Activated CD8-positive, alpha-beta memory T cell treated with anti-CD3 and anti-CD28 coated beads, Interleukin-2, amount 10 ng/mL, durations not matched to agents 7 days and 5 days (primary cell): ENCODE measurements at regions of chr19 and their contacts with region 1.

Region 1: DNA sequence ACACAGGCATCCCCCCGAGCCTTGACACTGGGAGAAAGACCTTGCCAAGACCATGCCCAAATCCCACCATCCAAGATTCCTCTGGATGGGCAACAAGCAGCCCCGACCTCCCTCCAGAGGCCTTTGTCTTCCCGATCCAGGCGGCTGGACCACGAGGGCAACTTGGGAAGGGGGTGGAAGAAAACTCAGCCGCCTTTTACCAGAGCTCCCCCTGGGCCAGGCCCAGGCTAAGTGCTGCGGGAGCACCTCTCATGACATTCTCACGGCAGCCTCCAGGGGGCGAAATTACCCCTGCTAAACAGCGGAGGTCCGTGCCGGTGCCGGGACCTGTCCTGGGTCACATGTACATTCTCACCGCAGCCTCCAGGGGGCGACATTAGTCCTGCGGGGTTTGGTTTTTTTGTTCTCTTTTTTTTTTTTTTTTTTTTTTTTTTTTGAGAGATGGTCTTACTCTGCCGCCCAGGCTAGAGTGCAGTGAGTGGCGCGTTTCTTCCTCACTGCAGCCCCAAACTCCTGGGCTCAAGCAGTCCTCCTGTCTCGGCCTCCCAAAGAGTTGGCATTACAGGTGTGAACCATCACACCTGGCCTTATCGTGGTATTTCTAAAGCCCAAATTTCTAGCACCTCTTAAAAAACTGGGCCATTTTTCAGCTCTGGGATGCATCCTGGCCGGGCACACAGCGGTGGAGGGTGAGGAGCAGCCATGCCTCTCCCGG is 2.1 kb upstream of the RSPH6A start:
- DNase-seq: peak; percentile 97
- ATAC-seq: peak; percentile 98
- H3K4me3 Mint-ChIP-seq: no peak overlapping the region
- H3K27ac Mint-ChIP-seq: no peak overlapping the region
- H3K4me1 Mint-ChIP-seq: peaks cover 6% of the 10 kb centered on the region
- H3K27me3 Mint-ChIP-seq: no peaks in the 10 kb centered on the region

Region 2: GRCh38 chr19:45632468-45633196 is 184.5 kb before region 1 on chr19:
- CTCF ChIA-PET with region 1: no interaction called
- DNase-seq: peak; percentile 58
- ATAC-seq: peak; percentile 42
- H3K4me3 Mint-ChIP-seq: no peak overlapping the region
- H3K27ac Mint-ChIP-seq: no peak overlapping the region
- H3K4me1 Mint-ChIP-seq: peaks cover 14% of the 10 kb centered on the region
- H3K27me3 Mint-ChIP-seq: no peaks in the 10 kb centered on the region

Region 3: DNA sequence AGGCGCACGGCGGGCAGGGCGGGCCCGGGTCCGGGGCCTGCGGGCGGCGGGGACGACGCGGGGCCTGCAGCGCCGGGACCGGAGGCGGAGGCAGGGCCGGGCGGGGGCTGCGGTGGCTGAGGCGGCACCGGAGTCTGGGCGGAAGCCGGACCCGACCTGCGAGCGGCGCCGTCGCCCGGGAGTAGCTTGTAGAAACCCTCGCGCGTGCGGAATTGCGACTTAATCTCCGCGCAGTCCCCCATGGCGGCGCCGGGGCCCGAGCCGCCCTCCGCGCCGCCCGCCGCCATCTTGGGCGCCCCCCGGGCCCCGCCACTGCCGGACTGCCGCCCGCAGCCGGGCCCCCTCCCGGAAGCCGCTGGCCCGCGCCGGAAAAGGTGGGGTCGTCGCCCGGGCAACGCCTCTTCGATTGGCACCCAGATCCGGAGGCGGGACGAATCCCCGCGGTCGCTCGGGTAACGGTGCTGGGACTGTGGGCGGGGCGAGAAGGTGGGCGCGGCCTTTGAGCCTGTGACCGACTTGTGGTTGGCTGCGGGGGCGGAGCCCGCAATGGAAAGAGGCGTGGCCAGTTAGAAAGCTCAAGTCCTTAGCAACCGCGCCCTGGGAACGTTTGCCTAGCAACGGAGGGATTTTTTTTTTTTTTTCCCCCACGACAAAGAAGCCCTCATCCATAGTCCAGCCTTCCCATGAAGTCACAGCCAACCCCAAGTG is 24.5 kb before region 1 on chr19 and contains the start of gene DMWD:
- CTCF ChIA-PET with region 1: interaction called, 12 read pairs
- DNase-seq: peak; percentile 100
- ATAC-seq: peak; percentile 90
- H3K4me3 Mint-ChIP-seq: peak within 1 kb of the TSS; percentile 82
- H3K27ac Mint-ChIP-seq: peak within 1 kb of the TSS; percentile 79
- H3K4me1 Mint-ChIP-seq: peaks cover 26% of the 10 kb centered on the region
- H3K27me3 Mint-ChIP-seq: peaks cover 40% of the 10 kb centered on the region
- total RNA-seq, gene DMWD: 47.0 to 47.9 TPM

Region 4: GRCh38 chr19:45804140-45804958 is 12.8 kb before region 1 on chr19:
- CTCF ChIA-PET with region 1: interaction called, 27 read pairs
- DNase-seq: no peak
- ATAC-seq: no peak
- H3K4me3 Mint-ChIP-seq: no peak overlapping the region
- H3K27ac Mint-ChIP-seq: no peak overlapping the region
- H3K4me1 Mint-ChIP-seq: peaks cover 2% of the 10 kb centered on the region
- H3K27me3 Mint-ChIP-seq: peaks cover 24% of the 10 kb centered on the region

Region 5: GRCh38 chr19:45854167-45854778 is 37.1 kb after region 1 on chr19:
- CTCF ChIA-PET with region 1: interaction called, 11 read pairs
- DNase-seq: no peak
- ATAC-seq: no peak
- H3K4me3 Mint-ChIP-seq: no peak overlapping the region
- H3K27ac Mint-ChIP-seq: no peak overlapping the region
- H3K4me1 Mint-ChIP-seq: peaks cover 5% of the 10 kb centered on the region
- H3K27me3 Mint-ChIP-seq: no peaks in the 10 kb centered on the region

Region 6: DNA sequence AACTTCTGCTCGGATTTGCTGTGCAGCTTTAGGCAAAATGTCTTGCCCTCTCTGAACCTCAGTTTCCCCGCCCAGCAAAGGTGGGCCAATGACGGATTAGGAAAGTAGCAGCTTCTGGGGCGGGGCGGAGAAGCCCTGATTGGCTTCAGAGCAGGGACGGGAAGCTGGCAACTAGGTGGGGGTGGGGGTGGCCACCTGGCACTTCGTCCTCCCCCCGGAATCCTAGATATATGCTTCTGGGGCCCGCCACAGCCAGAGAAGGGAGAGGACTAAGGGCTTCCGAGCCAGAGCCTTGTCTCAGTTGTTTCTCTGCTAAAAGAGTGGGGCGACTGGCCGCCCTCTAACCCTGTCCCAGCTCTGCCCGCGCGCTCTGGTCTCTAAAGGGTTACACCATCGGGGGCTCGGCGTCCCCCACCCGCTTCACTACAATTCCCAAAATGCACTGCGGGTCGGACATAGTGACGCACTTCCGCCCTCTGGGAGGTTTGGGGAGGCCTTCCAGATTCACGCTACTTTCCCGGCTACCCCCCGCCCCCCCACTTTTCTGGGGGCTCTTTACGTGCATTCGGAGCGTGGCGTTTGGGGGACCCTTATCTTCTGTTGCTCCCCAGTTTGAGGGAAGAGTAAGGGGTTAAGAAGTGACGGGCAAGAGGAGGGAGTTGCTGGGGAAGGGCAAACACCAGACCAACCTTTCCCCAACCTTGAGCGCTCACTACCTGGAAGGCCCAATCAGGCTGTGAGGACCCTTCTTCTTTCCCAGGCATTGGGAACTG is 69.4 kb after region 1 on chr19:
- CTCF ChIA-PET with region 1: interaction called, 68 read pairs
- DNase-seq: peak; percentile 97
- ATAC-seq: peak; percentile 85
- H3K4me3 Mint-ChIP-seq: peak overlapping the region; percentile 88
- H3K27ac Mint-ChIP-seq: peak overlapping the region; percentile 96
- H3K4me1 Mint-ChIP-seq: peaks cover 20% of the 10 kb centered on the region
- H3K27me3 Mint-ChIP-seq: no peaks in the 10 kb centered on the region